ENCODE measurements at regions of chr10 and their contacts with region 1.

Region 1: DNA sequence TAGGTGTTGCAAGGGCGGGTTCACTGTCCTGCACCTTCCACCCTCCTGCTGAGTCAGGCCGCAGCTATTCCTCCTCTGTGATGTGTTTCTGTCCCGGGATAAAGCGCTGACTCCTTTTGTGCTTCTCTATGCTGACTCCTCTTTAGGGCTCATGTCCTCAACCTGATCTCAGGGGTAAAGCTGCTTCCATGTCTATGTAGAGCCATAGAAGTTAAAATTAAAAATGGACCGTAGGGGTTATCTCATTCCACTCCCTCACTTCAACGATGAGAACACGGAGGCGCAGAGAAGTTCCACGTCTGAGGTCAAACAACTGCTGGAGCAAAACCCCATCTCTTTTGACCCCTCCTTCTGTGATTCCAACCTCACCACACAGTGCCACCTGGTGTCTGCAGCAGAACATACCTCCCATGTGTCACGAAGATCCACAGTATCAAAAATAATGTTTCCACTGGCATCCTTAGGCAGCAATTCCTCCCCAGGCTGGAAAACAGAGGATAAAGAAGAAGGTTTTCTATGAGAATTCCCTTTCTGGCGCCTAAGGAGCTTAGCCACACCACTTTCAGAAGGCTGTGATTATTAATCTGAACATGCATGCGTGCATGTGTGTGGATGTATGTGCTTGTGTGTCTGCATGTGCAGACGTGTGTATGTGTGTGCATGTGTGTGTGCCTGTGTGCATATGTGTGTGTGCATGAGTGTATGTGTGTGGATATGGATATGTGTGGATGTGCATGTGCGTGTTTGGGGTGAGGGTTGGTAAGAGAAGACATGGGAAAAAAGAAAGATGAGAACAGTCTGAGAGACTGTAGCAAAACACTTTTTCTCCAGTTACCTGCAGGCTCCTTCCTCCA is 81.2 kb upstream of the UCN3 start:
- DNase-seq: peak; percentile 83
- H3K4me3 Mint-ChIP-seq: peak overlapping the region; percentile 56
- H3K27ac Mint-ChIP-seq: peak overlapping the region; percentile 64
- H3K4me1 Mint-ChIP-seq: peaks cover 33% of the 10 kb centered on the region
- H3K27me3 Mint-ChIP-seq: no peaks in the 10 kb centered on the region
- CTCF ChIP-seq: peak; percentile 76

Region 2: GRCh38 chr10:5014936-5015335 is 268.6 kb before region 1 on chr10:
- CTCF ChIA-PET with region 1: no interaction called
- intact Hi-C with region 1: loop called (anchors 1 kb)
- DNase-seq: peak; percentile 35
- H3K4me3 Mint-ChIP-seq: no peak overlapping the region
- H3K27ac Mint-ChIP-seq: no peak overlapping the region
- H3K4me1 Mint-ChIP-seq: peaks cover 55% of the 10 kb centered on the region
- H3K27me3 Mint-ChIP-seq: no peaks in the 10 kb centered on the region
- CTCF ChIP-seq: no peak

Region 3: GRCh38 chr10:5147255-5147980 is 136.1 kb before region 1 on chr10:
- CTCF ChIA-PET with region 1: no interaction called
- intact Hi-C with region 1: loop called (anchors 5 kb)
- DNase-seq: peak; percentile 47
- H3K4me3 Mint-ChIP-seq: peak overlapping the region; percentile 44
- H3K27ac Mint-ChIP-seq: peak overlapping the region; percentile 85
- H3K4me1 Mint-ChIP-seq: peaks cover 39% of the 10 kb centered on the region
- H3K27me3 Mint-ChIP-seq: no peaks in the 10 kb centered on the region
- CTCF ChIP-seq: no peak

Region 4: GRCh38 chr10:5199398-5199797 is 84.1 kb before region 1 on chr10:
- CTCF ChIA-PET with region 1: no interaction called
- intact Hi-C with region 1: loop called (anchors 2 kb)
- DNase-seq: no peak
- H3K4me3 Mint-ChIP-seq: no peak overlapping the region
- H3K27ac Mint-ChIP-seq: no peak overlapping the region
- H3K4me1 Mint-ChIP-seq: peaks cover 18% of the 10 kb centered on the region
- H3K27me3 Mint-ChIP-seq: no peaks in the 10 kb centered on the region
- CTCF ChIP-seq: no peak

Region 5: DNA sequence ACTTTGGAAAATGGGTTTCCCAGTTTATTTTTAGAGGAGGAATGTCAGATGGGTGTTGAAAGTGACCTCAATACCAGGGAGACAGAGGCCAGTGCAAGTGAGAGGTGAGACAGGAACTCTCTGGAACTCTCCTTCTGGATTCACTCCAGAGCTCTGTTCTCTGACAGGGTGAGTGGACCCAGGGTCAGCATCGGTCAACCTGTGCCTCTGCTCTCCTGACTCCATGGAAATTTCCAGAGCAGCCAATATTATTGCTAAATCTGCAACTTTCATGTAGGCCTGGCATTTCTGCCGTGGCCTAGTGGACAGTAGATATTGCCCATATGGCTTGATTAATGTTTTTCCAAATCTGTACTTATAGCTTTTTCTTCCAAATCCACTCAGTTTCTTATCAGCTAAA is 66.7 kb before region 1 on chr10:
- CTCF ChIA-PET with region 1: no interaction called
- intact Hi-C with region 1: loop called (anchors 1 kb)
- DNase-seq: no peak
- H3K4me3 Mint-ChIP-seq: no peak overlapping the region
- H3K27ac Mint-ChIP-seq: no peak overlapping the region
- H3K4me1 Mint-ChIP-seq: peaks cover 18% of the 10 kb centered on the region
- H3K27me3 Mint-ChIP-seq: no peaks in the 10 kb centered on the region
- CTCF ChIP-seq: no peak

Measured in Calu3 (cell line).